Heart right ventricle (tissue), 16 donors: ENCODE measurements at regions of chr5 and their contacts with region 1.

Region 1: GRCh38 chr5:158414780-158415179 is 555.8 kb upstream of the CLINT1 start:
- DNase-seq: peak in 1 of 2 donors; percentile 35
- ATAC-seq: peak; percentile 71 to 91 (median 83)
- H3K4me3 ChIP-seq: no peak overlapping the region
- H3K27ac ChIP-seq: peak overlapping the region in 9 of 10 donors; percentile 1 to 60 (median 48)
- H3K4me1 ChIP-seq: peaks cover 0 to 22% (median 13%) of the 10 kb centered on the region in 9 donors
- H3K27me3 ChIP-seq: no peaks in the 10 kb centered on the region
- CTCF ChIP-seq: no peak

Region 2: GRCh38 chr5:157718519-157718918 is 696.3 kb before region 1 on chr5:
- intact Hi-C with region 1: no loop called
- DNase-seq: peak in 1 of 2 donors; percentile 23
- ATAC-seq: peak; percentile 72 to 94 (median 88)
- H3K4me3 ChIP-seq: no peak overlapping the region
- H3K27ac ChIP-seq: peak overlapping the region in 3 of 10 donors; percentile 7 to 44 (median 13)
- H3K4me1 ChIP-seq: peaks cover 0 to 13% (median 9%) of the 10 kb centered on the region in 9 donors
- H3K27me3 ChIP-seq: no peaks in the 10 kb centered on the region
- CTCF ChIP-seq: peak; percentile 34 to 83 (median 68)

Region 3: DNA sequence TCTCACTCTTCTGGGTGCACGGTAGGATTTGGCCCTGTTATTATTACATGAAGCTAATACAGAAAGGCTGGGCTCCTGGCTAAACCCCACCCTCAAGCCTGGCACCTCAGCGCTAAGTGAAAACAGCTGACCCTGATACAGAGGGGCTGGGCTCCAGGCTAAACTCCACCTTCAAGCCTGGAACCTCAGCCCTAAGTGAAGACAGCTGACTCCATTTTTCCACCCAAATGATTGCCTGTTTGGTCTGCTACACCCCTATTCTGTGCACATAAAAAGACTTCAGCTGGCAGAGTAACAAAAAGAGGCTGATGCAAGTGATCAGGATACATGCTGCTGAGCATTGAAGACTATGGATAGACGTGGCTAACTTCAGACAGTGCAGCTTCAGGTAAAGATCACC is 407.4 kb before region 1 on chr5:
- intact Hi-C with region 1: no loop called
- DNase-seq: no peak
- ATAC-seq: no peak
- H3K4me3 ChIP-seq: no peak overlapping the region
- H3K27ac ChIP-seq: no peak overlapping the region
- H3K4me1 ChIP-seq: no peaks in the 10 kb centered on the region
- H3K27me3 ChIP-seq: peaks cover 0 to 5% (median 0%) of the 10 kb centered on the region in 7 donors
- CTCF ChIP-seq: no peak

Region 4: GRCh38 chr5:158198636-158199035 is 216.1 kb before region 1 on chr5:
- intact Hi-C with region 1: loop called in 1 of 10 experiments (anchors 10 kb)
- DNase-seq: no peak
- ATAC-seq: no peak
- H3K4me3 ChIP-seq: no peak overlapping the region
- H3K27ac ChIP-seq: no peak overlapping the region
- H3K4me1 ChIP-seq: peaks cover 0 to 11% (median 0%) of the 10 kb centered on the region in 9 donors
- H3K27me3 ChIP-seq: no peaks in the 10 kb centered on the region
- CTCF ChIP-seq: no peak

Region 5: DNA sequence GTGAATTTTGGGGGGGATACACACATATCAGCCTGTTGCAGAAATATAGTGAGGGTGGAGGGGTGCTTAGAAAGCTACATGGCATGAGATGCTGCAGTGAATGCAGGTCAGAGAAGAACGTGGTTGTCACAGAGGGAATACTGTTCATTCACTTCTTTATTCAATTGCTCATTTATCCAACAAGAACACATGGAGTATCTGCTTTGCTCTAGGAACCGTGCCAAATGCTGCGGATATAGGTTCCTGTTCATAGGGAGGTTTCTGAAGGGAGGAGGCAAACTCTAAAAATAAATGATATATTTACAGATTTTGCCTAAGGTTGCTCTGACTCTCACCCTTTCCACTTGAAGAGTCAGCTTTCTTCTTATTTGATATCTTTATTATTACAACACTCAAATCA is 111.5 kb before region 1 on chr5:
- intact Hi-C with region 1: loop called in 1 of 10 experiments (anchors 10 kb)
- DNase-seq: no peak
- ATAC-seq: no peak
- H3K4me3 ChIP-seq: no peak overlapping the region
- H3K27ac ChIP-seq: no peak overlapping the region
- H3K4me1 ChIP-seq: peaks cover 0 to 19% (median 0%) of the 10 kb centered on the region in 9 donors
- H3K27me3 ChIP-seq: no peaks in the 10 kb centered on the region
- CTCF ChIP-seq: no peak